CD8-positive, alpha-beta T cell (primary cell): ENCODE measurements at regions of chrX and their contacts with region 1.

Region 1: GRCh38 chrX:139784807-139785206 is 76.8 kb upstream of the MCF2 start:
- DNase-seq: no peak
- ATAC-seq: no peak
- H3K4me3 ChIP-seq: no peak overlapping the region
- H3K4me3 Mint-ChIP-seq: no peak overlapping the region
- H3K27ac ChIP-seq: no peak overlapping the region
- H3K27ac Mint-ChIP-seq: no peak overlapping the region
- H3K4me1 ChIP-seq: no peaks in the 10 kb centered on the region
- H3K4me1 Mint-ChIP-seq: no peaks in the 10 kb centered on the region
- H3K27me3 ChIP-seq: no peaks in the 10 kb centered on the region
- H3K27me3 Mint-ChIP-seq: no peaks in the 10 kb centered on the region
- CTCF ChIP-seq: no peak

Region 2: DNA sequence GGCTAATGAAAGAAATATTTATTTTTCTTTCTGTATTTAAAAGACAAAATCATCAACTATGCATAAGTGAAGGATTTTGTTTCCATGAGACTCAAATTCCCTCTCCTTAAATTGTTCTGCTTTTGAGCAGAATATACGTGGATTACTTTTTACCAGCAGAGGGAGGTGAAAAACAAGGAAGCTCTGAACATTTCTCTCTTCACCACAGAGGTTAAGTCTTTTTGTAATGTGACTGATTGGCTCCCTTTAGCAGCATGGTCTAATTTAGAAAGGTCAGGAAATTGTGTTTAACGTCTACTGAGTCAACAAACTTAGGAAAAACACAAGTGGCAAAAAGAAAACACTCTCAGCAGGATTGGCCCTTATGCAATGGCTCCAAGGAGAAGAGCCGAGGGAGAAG is 309.4 kb before region 1 on chrX:
- CTCF ChIA-PET with region 1: no interaction called
- POLR2A ChIA-PET with region 1: no interaction called
- intact Hi-C with region 1: no loop called
- DNase-seq: no peak
- ATAC-seq: no peak
- H3K4me3 ChIP-seq: no peak overlapping the region
- H3K4me3 Mint-ChIP-seq: no peak overlapping the region
- H3K27ac ChIP-seq: no peak overlapping the region
- H3K27ac Mint-ChIP-seq: no peak overlapping the region
- H3K4me1 ChIP-seq: no peaks in the 10 kb centered on the region
- H3K4me1 Mint-ChIP-seq: no peaks in the 10 kb centered on the region
- H3K27me3 ChIP-seq: no peaks in the 10 kb centered on the region
- H3K27me3 Mint-ChIP-seq: no peaks in the 10 kb centered on the region
- CTCF ChIP-seq: no peak

Region 3: DNA sequence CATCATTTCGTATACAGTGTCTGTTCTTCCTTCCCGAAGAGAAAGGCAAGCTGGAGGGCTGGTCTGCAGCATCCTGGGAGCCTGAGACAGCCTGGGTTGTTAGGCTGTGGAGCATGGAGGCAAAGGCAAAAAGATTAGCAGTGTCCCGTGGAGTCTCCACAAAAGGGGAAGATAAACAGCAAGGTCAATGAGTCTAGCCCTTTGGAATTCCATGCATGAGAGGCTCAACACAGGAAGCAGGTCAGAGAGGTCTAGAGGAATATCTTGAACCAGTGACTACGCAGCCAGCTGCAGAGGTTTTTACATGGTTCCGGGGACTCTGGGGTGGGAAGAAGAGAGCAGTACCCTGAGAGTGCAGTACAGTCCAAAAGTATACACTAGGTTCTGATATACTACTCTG is 64.7 kb before region 1 on chrX:
- CTCF ChIA-PET with region 1: no interaction called
- POLR2A ChIA-PET with region 1: no interaction called
- intact Hi-C with region 1: no loop called
- DNase-seq: no peak
- ATAC-seq: no peak
- H3K4me3 ChIP-seq: no peak overlapping the region
- H3K4me3 Mint-ChIP-seq: no peak overlapping the region
- H3K27ac ChIP-seq: no peak overlapping the region
- H3K27ac Mint-ChIP-seq: no peak overlapping the region
- H3K4me1 ChIP-seq: no peaks in the 10 kb centered on the region
- H3K4me1 Mint-ChIP-seq: no peaks in the 10 kb centered on the region
- H3K27me3 ChIP-seq: no peaks in the 10 kb centered on the region
- H3K27me3 Mint-ChIP-seq: no peaks in the 10 kb centered on the region
- CTCF ChIP-seq: no peak

Region 4: GRCh38 chrX:139831675-139832456 is 47.1 kb after region 1 on chrX:
- CTCF ChIA-PET with region 1: no interaction called
- POLR2A ChIA-PET with region 1: no interaction called
- intact Hi-C with region 1: loop called in 1 of 2 experiments (anchors 10 kb)
- DNase-seq: no peak
- ATAC-seq: no peak
- H3K4me3 ChIP-seq: no peak overlapping the region
- H3K4me3 Mint-ChIP-seq: no peak overlapping the region
- H3K27ac ChIP-seq: no peak overlapping the region
- H3K27ac Mint-ChIP-seq: no peak overlapping the region
- H3K4me1 ChIP-seq: peaks cover 11% of the 10 kb centered on the region
- H3K4me1 Mint-ChIP-seq: peaks cover 44% of the 10 kb centered on the region
- H3K27me3 ChIP-seq: no peaks in the 10 kb centered on the region
- H3K27me3 Mint-ChIP-seq: no peaks in the 10 kb centered on the region
- CTCF ChIP-seq: no peak